CD4-positive, alpha-beta memory T cell (primary cell): ENCODE measurements at regions of chr19 and their contacts with region 1.

Region 1: GRCh38 chr19:45994989-45995714 is at the start of gene CCDC61:
- DNase-seq: peak; percentile 99 to 100 (median 99)
- H3K4me3 ChIP-seq: peak within 1 kb of the TSS; percentile 75 to 78
- H3K4me3 Mint-ChIP-seq: peak within 1 kb of the TSS in 2 of 8 donors; percentile 26 to 51
- H3K27ac ChIP-seq: peak within 1 kb of the TSS; percentile 88
- H3K27ac Mint-ChIP-seq: peak within 1 kb of the TSS in 1 of 7 donors; percentile 75
- H3K4me1 ChIP-seq: peaks cover 24% of the 10 kb centered on the region
- H3K4me1 Mint-ChIP-seq: peaks cover 9 to 19% (median 17%) of the 10 kb centered on the region in 4 donors
- H3K27me3 ChIP-seq: no peaks in the 10 kb centered on the region
- H3K27me3 Mint-ChIP-seq: peaks cover 2 to 6% of the 10 kb centered on the region in 2 donors
- total RNA-seq, gene CCDC61: 37.4 to 39.6 TPM

Region 2: GRCh38 chr19:45717166-45717982 is 277.8 kb before region 1 on chr19:
- CTCF ChIA-PET with region 1: no interaction called
- POLR2A ChIA-PET with region 1: no interaction called
- intact Hi-C with region 1: loop called (anchors 1 kb)
- DNase-seq: peak; percentile 97 to 99 (median 98)
- H3K4me3 ChIP-seq: peak overlapping the region; percentile 72 to 90
- H3K4me3 Mint-ChIP-seq: peak overlapping the region; percentile 92 to 99 (median 97)
- H3K27ac ChIP-seq: peak overlapping the region; percentile 86
- H3K27ac Mint-ChIP-seq: peak overlapping the region; percentile 84 to 99 (median 98)
- H3K4me1 ChIP-seq: peaks cover 38% of the 10 kb centered on the region
- H3K4me1 Mint-ChIP-seq: peaks cover 32 to 59% (median 39%) of the 10 kb centered on the region in 4 donors
- H3K27me3 ChIP-seq: no peaks in the 10 kb centered on the region
- H3K27me3 Mint-ChIP-seq: no peaks in the 10 kb centered on the region

Region 3: GRCh38 chr19:45886427-45887199 is 108.5 kb before region 1 on chr19:
- CTCF ChIA-PET with region 1: no interaction called
- POLR2A ChIA-PET with region 1: interaction called, 4 read pairs
- intact Hi-C with region 1: loop called (anchors 1 kb)
- DNase-seq: peak; percentile 87 to 93 (median 91)
- H3K4me3 ChIP-seq: peak overlapping the region; percentile 65 to 71
- H3K4me3 Mint-ChIP-seq: peak overlapping the region; percentile 94 to 98 (median 98)
- H3K27ac ChIP-seq: peak overlapping the region; percentile 68
- H3K27ac Mint-ChIP-seq: peak overlapping the region; percentile 97 to 99 (median 99)
- H3K4me1 ChIP-seq: peaks cover 40% of the 10 kb centered on the region
- H3K4me1 Mint-ChIP-seq: peaks cover 11 to 36% (median 19%) of the 10 kb centered on the region in 4 donors
- H3K27me3 ChIP-seq: no peaks in the 10 kb centered on the region
- H3K27me3 Mint-ChIP-seq: peaks cover 0 to under 1% of the 10 kb centered on the region in 2 donors

Region 4: DNA sequence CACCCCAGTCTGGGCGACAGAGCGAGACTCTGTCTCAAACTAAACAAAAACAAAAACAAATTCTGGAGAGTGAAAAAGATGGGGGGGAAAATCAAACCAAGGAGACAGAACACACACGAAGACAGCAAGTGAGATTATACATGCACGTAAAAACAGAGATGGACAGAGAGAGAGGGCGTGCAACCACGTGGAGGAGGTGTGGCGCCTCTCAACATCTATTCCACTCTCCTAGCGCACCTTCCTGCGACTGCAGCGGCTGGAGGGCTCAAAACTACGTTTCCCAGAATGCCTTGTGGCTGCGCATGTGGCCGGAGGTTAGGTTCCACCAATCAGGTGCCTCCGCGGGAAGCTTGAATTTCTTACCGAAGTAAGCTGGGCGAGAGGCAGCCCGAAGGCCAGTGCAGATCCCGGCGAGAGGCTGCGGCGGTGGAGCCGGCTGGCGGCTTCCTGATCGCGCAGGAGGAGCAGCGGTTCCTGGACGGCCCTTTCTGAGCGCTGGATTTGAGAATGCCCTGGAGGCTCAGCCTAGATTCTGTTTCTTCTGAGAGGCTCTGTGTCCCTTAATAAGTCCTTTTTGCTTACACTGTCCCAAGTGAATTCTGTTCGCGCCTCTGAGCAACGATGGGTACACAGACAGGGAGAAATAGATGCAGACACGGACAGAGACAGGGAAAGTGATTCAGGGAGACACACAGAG is 67.4 kb before region 1 on chr19:
- CTCF ChIA-PET with region 1: no interaction called
- POLR2A ChIA-PET with region 1: interaction called, 3 read pairs
- intact Hi-C with region 1: loop called (anchors 1 kb)
- DNase-seq: peak; percentile 85 to 90 (median 87)
- H3K4me3 ChIP-seq: no peak overlapping the region
- H3K4me3 Mint-ChIP-seq: peak overlapping the region in 5 of 8 donors; percentile 12 to 69 (median 27)
- H3K27ac ChIP-seq: no peak overlapping the region
- H3K27ac Mint-ChIP-seq: peak overlapping the region in 3 of 7 donors; percentile 43 to 84 (median 70)
- H3K4me1 ChIP-seq: peaks cover 8% of the 10 kb centered on the region
- H3K4me1 Mint-ChIP-seq: peaks cover 2 to 12% (median 6%) of the 10 kb centered on the region in 4 donors
- H3K27me3 ChIP-seq: no peaks in the 10 kb centered on the region
- H3K27me3 Mint-ChIP-seq: peaks cover 5 to 8% of the 10 kb centered on the region in 2 donors

Region 5: GRCh38 chr19:45973578-45974338 is 21.4 kb before region 1 on chr19 and contains the start of gene NOVA2:
- CTCF ChIA-PET with region 1: no interaction called
- POLR2A ChIA-PET with region 1: no interaction called
- intact Hi-C with region 1: no loop called
- DNase-seq: no peak
- H3K4me3 ChIP-seq: no peak within 1 kb of the TSS
- H3K4me3 Mint-ChIP-seq: peak within 1 kb of the TSS in 7 of 8 donors; percentile 21 to 73 (median 52)
- H3K27ac ChIP-seq: no peak within 1 kb of the TSS
- H3K27ac Mint-ChIP-seq: peak within 1 kb of the TSS in 2 of 7 donors; percentile 27 to 54
- H3K4me1 ChIP-seq: peaks cover 24% of the 10 kb centered on the region
- H3K4me1 Mint-ChIP-seq: peaks cover 14 to 23% (median 18%) of the 10 kb centered on the region in 4 donors
- H3K27me3 ChIP-seq: peaks cover 27% of the 10 kb centered on the region
- H3K27me3 Mint-ChIP-seq: peaks cover 48 to 53% of the 10 kb centered on the region in 2 donors
- total RNA-seq, gene NOVA2: not detected

Region 6: DNA sequence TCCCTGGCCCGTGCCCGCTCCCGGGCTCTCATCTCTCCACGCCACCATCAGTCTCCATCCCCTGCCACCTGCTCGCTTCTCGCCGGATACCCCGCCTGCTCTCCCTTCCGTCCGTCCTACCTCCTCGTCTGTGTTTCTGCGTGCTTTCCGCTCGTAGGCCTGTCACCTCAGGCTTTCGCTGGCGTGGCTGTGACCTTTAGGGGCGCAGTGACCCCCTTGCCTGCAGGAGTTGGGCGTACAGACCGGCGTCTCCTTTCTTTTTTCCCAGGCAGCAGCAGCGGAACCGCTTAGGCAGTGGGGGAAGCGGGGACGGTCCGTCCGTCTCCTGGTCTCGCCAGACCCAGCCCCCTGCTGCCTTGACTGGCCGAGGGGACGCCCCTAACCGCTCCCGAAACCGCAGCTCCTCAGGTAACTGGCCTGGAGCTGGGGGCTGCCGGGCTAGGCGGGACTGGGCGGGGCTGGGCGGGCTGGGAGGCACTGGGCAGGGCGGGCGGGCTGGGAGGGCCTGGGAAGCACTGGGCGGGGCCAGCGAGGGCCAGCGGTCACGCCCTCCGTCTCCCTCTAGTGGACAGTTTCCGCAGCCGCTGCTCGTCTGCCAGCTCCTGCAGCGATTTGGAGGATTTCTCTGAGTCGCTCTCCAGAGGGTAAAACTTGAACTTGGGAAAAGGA is 21.4 kb after region 1 on chr19:
- CTCF ChIA-PET with region 1: interaction called, 16 read pairs
- POLR2A ChIA-PET with region 1: interaction called, 10 read pairs
- intact Hi-C with region 1: loop called (anchors 1 kb)
- DNase-seq: peak; percentile 69 to 79 (median 76)
- H3K4me3 ChIP-seq: peak overlapping the region; percentile 76 to 80
- H3K4me3 Mint-ChIP-seq: peak overlapping the region; percentile 86 to 94 (median 91)
- H3K27ac ChIP-seq: peak overlapping the region; percentile 53
- H3K27ac Mint-ChIP-seq: peak overlapping the region; percentile 10 to 88 (median 71)
- H3K4me1 ChIP-seq: peaks cover 14% of the 10 kb centered on the region
- H3K4me1 Mint-ChIP-seq: peaks cover 12 to 21% (median 16%) of the 10 kb centered on the region in 4 donors
- H3K27me3 ChIP-seq: no peaks in the 10 kb centered on the region
- H3K27me3 Mint-ChIP-seq: peaks cover 0 to 5% of the 10 kb centered on the region in 2 donors